Activated CD4-positive, alpha-beta memory T cell treated with anti-CD3 and anti-CD28 coated beads for 36 hours (primary cell): ENCODE measurements at regions of chr7 and their contacts with region 1.

Region 1: DNA sequence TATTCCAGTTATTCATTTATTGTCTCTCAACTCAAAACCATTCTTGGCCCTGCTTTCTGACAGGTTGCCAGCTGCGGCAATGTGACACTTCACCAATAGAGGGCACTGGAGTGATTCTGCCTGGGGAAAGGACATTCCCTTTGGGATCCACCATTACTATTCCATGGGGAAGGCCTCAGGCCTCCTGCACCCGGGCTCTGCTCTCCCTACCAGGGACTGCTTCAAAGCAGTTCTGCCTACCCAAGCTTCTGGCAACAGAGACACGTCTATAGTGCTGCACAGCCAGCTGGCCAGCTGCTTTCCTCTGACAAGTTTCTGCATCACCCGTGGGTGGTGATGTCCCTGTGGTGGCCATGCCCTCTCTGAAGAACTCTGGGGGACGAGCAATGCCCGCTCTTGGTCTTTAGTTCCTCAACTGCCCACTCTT is 163.8 kb downstream of the ELMO1 start:
- DNase-seq: peak; percentile 57
- H3K4me3 Mint-ChIP-seq: no peak overlapping the region
- H3K27ac Mint-ChIP-seq: no peak overlapping the region
- H3K4me1 Mint-ChIP-seq: peaks cover 45% of the 10 kb centered on the region
- H3K27me3 Mint-ChIP-seq: no peaks in the 10 kb centered on the region

Region 2: DNA sequence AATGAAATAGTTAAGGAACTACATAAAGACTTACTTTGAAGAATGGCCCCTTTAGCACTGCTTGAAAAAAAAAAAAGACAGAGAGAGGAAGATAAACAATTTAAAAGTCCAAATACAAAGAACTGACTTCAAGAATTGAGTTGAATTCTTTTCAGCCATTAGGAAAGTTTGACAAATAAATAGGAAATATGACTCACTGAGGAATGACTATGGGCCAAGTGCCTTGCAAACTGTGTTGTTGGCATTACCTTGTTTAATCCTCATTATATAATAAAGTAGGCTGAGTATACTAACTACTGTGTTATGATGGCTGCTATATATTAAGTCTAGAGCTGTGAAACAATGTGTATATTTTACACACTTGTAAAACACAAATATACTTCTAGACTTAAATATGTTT is 12.7 kb after region 1 on chr7:
- CTCF ChIA-PET with region 1: interaction called, 20 read pairs
- POLR2A ChIA-PET with region 1: no interaction called
- intact Hi-C with region 1: no loop called
- DNase-seq: no peak
- H3K4me3 Mint-ChIP-seq: no peak overlapping the region
- H3K27ac Mint-ChIP-seq: peak overlapping the region; percentile 63
- H3K4me1 Mint-ChIP-seq: peaks cover 8% of the 10 kb centered on the region
- H3K27me3 Mint-ChIP-seq: no peaks in the 10 kb centered on the region

Region 3: GRCh38 chr7:37336259-37336658 is 51.4 kb after region 1 on chr7:
- CTCF ChIA-PET with region 1: interaction called, 15 read pairs
- POLR2A ChIA-PET with region 1: no interaction called
- intact Hi-C with region 1: no loop called
- DNase-seq: peak; percentile 71
- H3K4me3 Mint-ChIP-seq: peak overlapping the region; percentile 17
- H3K27ac Mint-ChIP-seq: peak overlapping the region; percentile 76
- H3K4me1 Mint-ChIP-seq: peaks cover 89% of the 10 kb centered on the region
- H3K27me3 Mint-ChIP-seq: no peaks in the 10 kb centered on the region